GM23248 (cell line): ENCODE measurements at regions of chr16 and their contacts with region 1.

Region 1: GRCh38 chr16:89343501-89344457 is 126.3 kb downstream of the ZNF778 start:
- DNase-seq: peak; percentile 46
- H3K4me3 ChIP-seq: no peak overlapping the region
- H3K27ac ChIP-seq: peak overlapping the region; percentile 38
- H3K4me1 ChIP-seq: peaks cover 20% of the 10 kb centered on the region
- H3K27me3 ChIP-seq: no peaks in the 10 kb centered on the region

Region 2: GRCh38 chr16:89132291-89133005 is 211.3 kb before region 1 on chr16:
- in situ Hi-C with region 1: no loop called
- DNase-seq: no peak
- H3K4me3 ChIP-seq: no peak overlapping the region
- H3K27ac ChIP-seq: no peak overlapping the region
- H3K4me1 ChIP-seq: no peaks in the 10 kb centered on the region
- H3K27me3 ChIP-seq: no peaks in the 10 kb centered on the region

Region 3: DNA sequence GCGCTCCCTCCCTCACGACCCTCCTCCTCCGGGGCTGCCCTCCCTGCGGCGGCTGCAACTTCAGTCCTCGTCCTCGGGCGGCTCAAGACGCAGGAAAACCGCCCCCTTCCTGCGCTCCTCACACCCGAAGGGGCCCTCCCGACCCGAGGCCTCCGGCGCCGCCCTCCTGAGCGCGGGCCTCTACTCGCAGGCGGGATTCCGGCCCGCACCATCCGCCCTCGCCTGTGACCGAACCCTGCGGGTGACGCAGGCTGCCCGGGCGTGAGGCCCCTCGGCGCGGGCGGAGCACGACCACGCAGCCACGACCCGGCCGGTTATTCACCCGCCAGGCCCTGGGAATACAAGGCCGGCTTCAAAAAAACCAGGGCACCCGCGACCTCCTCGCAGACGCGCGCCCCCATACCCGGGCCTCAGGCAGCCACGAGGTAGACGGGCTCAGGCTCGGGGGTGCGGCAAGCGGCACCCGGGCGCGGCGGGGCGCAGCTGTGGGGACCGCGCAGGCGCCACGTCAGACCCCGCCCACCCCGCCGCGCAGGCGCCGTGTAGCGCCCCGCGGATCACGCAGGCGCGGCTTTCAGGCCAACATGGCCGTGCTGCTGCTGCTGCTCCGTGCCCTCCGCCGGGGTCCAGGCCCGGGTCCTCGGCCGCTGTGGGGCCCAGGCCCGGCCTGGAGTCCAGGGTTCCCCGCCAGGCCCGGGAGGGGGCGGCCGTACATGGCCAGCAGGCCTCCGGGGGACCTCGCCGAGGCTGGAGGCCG is 164.2 kb after region 1 on chr16 and contains the start of gene SPG7:
- in situ Hi-C with region 1: loop called (anchors 10 kb)
- DNase-seq: peak; percentile 95
- H3K4me3 ChIP-seq: peak within 1 kb of the TSS; percentile 86
- H3K27ac ChIP-seq: peak within 1 kb of the TSS; percentile 87
- H3K4me1 ChIP-seq: peaks cover 24% of the 10 kb centered on the region
- H3K27me3 ChIP-seq: no peaks in the 10 kb centered on the region
- total RNA-seq, gene SPG7: 155 and 215 TPM in 2 replicates